Activated T-helper 2 cell treated with anti-CD3 and anti-CD28 coated beads, Interferon-gamma antibody, Interleukin-2, Interleukin-4, amounts not matched to agents 10 μg/mL and 5 μg/mL and 100 μg/mL, durations not matched to agents 14 hours and 24 hours and 36 hours (primary cell): ENCODE measurements at regions of chr12 and their contacts with region 1.

Region 1: GRCh38 chr12:6461401-6462233 is 8.9 kb downstream of the VAMP1 start:
- DNase-seq: peak; percentile 83
- H3K4me3 Mint-ChIP-seq: peak overlapping the region; percentile 75
- H3K27ac Mint-ChIP-seq: peak overlapping the region; percentile 99
- H3K4me1 Mint-ChIP-seq: peaks cover 67% of the 10 kb centered on the region
- H3K27me3 Mint-ChIP-seq: no peaks in the 10 kb centered on the region

Region 2: DNA sequence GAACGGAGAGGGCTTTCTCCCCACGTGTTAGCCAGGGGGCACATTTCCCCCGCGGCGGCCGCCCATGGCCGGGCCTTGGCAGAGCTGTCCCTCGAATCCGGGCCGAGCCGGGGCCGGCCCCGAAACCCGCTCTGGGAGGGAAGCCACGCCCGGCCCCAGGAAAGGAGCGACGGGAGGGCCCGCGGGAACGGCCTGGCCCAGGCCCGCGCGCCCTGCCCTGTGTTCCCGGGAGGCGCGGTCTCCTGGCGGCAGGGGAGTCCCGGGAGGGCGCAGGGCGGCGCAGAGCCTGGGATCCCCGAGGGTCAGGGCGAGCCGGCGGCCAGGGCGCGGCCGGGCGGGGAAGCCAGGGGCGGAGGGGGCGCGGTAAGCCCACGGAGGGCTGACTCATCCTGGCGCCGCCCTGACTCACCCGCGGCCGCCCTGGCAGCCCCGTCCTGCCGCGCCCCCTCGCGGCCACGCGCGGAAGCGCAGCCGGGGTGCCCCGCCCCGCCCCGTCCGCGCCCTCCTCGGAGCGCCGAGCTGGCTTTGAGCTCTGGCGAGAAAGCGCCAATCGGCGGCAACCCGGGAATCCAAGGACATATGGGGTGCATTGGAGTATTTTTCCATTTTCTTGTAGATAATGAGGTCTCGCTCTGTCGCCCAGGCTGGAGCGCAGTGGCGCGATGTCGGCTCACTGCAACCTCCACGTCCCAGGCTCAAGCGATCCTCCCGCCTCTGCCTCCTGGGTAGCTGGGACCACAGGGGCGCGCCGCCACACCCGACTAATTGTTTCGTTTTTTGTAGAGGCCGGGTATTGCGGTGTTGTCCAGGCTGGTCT is 183.0 kb before region 1 on chr12:
- intact Hi-C with region 1: no loop called
- DNase-seq: peak; percentile 79
- H3K4me3 Mint-ChIP-seq: peak overlapping the region; percentile 78
- H3K27ac Mint-ChIP-seq: peak overlapping the region; percentile 73
- H3K4me1 Mint-ChIP-seq: peaks cover 9% of the 10 kb centered on the region
- H3K27me3 Mint-ChIP-seq: peaks cover 44% of the 10 kb centered on the region

Region 3: DNA sequence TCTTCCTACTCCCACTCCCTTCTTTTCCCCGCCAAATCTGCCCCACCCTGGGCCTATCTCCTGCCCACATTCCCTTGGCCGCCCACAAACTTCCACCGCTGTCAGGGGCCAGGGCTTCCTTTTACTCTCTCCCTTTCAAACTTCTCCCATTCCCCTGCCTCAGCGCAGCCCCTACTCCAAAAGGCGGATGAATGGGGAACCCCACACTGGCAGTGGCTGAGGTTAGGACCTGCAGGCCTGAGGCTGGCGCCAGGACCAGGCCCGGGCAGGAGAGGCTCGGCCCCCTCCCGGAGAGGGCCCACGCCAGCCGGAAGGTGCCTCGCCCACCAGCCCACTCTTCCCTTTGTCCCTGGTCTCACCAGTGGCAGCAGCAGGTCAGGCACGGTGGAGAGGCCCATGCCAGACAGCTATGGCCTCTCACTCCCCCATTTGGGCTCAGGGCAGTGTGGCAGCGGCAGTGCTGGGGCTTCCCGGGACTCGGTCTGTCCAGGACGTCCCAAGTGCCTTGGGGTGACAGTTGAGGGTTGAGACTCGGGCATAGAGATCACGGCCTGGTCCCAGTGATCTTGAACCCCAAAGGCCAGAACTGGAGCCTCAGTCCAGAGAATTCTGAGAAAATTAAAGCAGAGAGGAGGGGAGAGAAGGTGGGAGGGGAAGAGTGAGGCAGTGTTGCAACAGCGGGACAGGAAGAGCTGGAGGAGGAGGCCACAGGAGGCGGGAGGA is 120.0 kb before region 1 on chr12 and contains the start of gene TNFRSF1A:
- intact Hi-C with region 1: loop called (anchors 2 kb)
- DNase-seq: no peak
- H3K4me3 Mint-ChIP-seq: no peak within 1 kb of the TSS
- H3K27ac Mint-ChIP-seq: no peak within 1 kb of the TSS
- H3K4me1 Mint-ChIP-seq: peaks cover 37% of the 10 kb centered on the region
- H3K27me3 Mint-ChIP-seq: no peaks in the 10 kb centered on the region
- total RNA-seq, gene TNFRSF1A: 37.6 TPM in 2 replicates

Region 4: GRCh38 chr12:6443361-6443983 is 18.1 kb before region 1 on chr12:
- intact Hi-C with region 1: loop called (anchors 2 kb)
- DNase-seq: no peak
- H3K4me3 Mint-ChIP-seq: peak overlapping the region; percentile 65
- H3K27ac Mint-ChIP-seq: peak overlapping the region; percentile 91
- H3K4me1 Mint-ChIP-seq: peaks cover 59% of the 10 kb centered on the region
- H3K27me3 Mint-ChIP-seq: no peaks in the 10 kb centered on the region

Region 5: GRCh38 chr12:6451348-6452244 is 10.0 kb before region 1 on chr12 and contains the start of gene TAPBPL:
- intact Hi-C with region 1: loop called (anchors 1 kb)
- DNase-seq: peak; percentile 78
- H3K4me3 Mint-ChIP-seq: peak within 1 kb of the TSS; percentile 92
- H3K27ac Mint-ChIP-seq: peak within 1 kb of the TSS; percentile 92
- H3K4me1 Mint-ChIP-seq: peaks cover 54% of the 10 kb centered on the region
- H3K27me3 Mint-ChIP-seq: no peaks in the 10 kb centered on the region
- total RNA-seq, gene TAPBPL: 30.9 and 37.4 TPM in 2 replicates